ENCODE measurements at regions of chr7 and their contacts with region 1.

Region 1: DNA sequence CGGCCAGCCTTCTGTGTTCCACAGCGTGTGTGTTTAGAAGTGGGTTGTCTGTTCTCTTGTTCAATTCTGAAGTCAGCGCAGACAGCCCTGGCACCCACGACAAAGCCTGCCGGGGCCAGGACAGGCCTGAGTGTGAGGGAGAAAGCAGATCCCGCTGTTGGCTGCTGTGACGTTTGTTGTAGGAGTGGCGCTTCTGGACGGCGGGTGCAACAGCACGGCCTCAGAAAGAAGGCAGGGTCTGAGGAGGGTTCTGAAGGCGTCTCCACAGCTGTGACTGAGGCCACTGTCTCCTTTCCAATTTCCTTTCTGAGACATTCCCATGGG is 76.2 kb downstream of the VIPR2 start:
- DNase-seq: peak; percentile 79 to 88
- ATAC-seq: peak; percentile 90 to 96 (median 91)
- H3K4me3 ChIP-seq: peak overlapping the region; percentile 15
- H3K27ac ChIP-seq: peak overlapping the region; percentile 78
- H3K4me1 ChIP-seq: peaks cover 17% of the 10 kb centered on the region
- H3K27me3 ChIP-seq: no peaks in the 10 kb centered on the region
- CTCF ChIP-seq: no peak

Region 2: GRCh38 chr7:157438121-157439025 is 1630.1 kb before region 1 on chr7:
- intact Hi-C with region 1: no loop called
- DNase-seq: peak in 1 of 2 donors; percentile 20
- ATAC-seq: no peak
- H3K4me3 ChIP-seq: no peak overlapping the region
- H3K27ac ChIP-seq: no peak overlapping the region
- H3K4me1 ChIP-seq: no peaks in the 10 kb centered on the region
- H3K27me3 ChIP-seq: no peaks in the 10 kb centered on the region
- CTCF ChIP-seq: no peak

Region 3: GRCh38 chr7:158760936-158761335 is 307.5 kb before region 1 on chr7:
- intact Hi-C with region 1: no loop called
- DNase-seq: no peak
- ATAC-seq: no peak
- H3K4me3 ChIP-seq: no peak overlapping the region
- H3K27ac ChIP-seq: no peak overlapping the region
- H3K4me1 ChIP-seq: no peaks in the 10 kb centered on the region
- H3K27me3 ChIP-seq: no peaks in the 10 kb centered on the region
- CTCF ChIP-seq: no peak

Region 4: DNA sequence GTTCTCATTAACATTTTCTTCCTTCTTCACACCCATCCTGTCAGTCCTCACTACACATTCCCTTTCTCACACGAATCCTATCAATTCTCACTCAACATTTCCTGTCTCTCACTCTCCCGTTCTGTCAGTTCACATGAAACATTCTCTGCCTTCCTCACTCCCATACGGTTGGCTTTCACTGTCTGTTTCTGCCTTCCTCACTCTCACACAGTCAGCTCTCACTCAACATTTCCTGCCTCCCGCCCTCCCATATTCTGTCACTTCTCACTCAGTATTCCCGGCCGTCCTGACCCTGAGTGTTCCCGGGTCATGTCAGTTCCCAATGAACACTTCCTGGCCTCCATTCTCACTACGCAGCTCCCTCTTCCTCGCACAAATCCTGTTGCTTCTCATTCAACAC is 150.6 kb before region 1 on chr7:
- intact Hi-C with region 1: no loop called
- DNase-seq: no peak
- ATAC-seq: no peak
- H3K4me3 ChIP-seq: no peak overlapping the region
- H3K27ac ChIP-seq: no peak overlapping the region
- H3K4me1 ChIP-seq: no peaks in the 10 kb centered on the region
- H3K27me3 ChIP-seq: no peaks in the 10 kb centered on the region
- CTCF ChIP-seq: no peak

Region 5: GRCh38 chr7:159049266-159050025 is 19.0 kb before region 1 on chr7:
- intact Hi-C with region 1: loop called in 1 of 2 experiments (anchors 2 kb)
- DNase-seq: no peak
- ATAC-seq: no peak
- H3K4me3 ChIP-seq: no peak overlapping the region
- H3K27ac ChIP-seq: no peak overlapping the region
- H3K4me1 ChIP-seq: no peaks in the 10 kb centered on the region
- H3K27me3 ChIP-seq: no peaks in the 10 kb centered on the region
- CTCF ChIP-seq: no peak

Region 6: DNA sequence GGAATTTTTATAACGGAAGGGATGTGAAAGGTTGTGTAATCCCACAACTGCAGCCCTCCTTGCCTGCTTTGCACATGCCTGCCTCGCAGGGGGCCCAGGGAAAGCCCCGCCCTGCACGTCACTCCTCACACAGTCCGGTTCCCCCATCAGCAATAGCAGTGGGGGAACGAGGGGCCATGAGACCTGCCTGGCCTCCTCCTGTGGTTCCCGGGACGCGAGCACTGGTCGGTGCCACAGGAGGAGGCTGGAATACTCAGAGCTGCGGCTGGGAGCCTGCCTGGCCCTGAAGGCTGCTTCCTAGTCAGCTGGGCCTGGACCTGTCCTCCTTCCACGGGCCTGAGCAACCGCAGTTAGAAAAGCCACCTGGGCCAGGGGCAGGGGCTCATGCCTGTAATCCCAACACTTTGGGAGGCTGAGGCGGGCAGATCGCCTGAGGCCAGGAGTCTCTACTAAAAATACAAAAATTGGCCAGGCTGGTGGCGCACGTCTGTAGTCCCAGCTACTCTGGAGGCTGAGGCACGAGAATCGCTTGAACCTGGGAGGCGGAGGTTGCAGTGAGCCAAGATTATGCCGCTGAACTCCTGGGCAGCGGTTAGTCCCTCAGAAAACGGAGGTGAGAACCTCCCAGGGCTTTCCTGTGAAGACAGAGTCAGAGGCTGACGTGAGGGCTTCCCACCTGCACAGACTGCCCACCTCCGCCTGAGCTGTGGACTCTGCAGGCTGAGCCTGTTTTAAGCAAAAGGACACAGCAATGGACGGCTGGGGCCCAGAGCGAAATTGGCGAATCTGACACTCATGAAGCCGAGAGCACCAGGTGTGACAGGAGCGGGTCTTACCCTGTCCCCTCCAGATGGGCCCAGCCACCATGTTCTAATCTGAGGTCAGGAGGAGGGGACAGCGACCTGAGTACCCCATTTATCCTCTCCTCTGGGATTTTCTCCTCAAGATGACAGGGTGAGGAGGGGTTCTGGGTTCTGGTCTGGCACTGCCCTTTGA is 23.3 kb after region 1 on chr7:
- intact Hi-C with region 1: loop called in 1 of 2 experiments (anchors 2 kb)
- DNase-seq: no peak
- ATAC-seq: no peak
- H3K4me3 ChIP-seq: no peak overlapping the region
- H3K27ac ChIP-seq: no peak overlapping the region
- H3K4me1 ChIP-seq: peaks cover 26% of the 10 kb centered on the region
- H3K27me3 ChIP-seq: no peaks in the 10 kb centered on the region
- CTCF ChIP-seq: no peak

Region 7: DNA sequence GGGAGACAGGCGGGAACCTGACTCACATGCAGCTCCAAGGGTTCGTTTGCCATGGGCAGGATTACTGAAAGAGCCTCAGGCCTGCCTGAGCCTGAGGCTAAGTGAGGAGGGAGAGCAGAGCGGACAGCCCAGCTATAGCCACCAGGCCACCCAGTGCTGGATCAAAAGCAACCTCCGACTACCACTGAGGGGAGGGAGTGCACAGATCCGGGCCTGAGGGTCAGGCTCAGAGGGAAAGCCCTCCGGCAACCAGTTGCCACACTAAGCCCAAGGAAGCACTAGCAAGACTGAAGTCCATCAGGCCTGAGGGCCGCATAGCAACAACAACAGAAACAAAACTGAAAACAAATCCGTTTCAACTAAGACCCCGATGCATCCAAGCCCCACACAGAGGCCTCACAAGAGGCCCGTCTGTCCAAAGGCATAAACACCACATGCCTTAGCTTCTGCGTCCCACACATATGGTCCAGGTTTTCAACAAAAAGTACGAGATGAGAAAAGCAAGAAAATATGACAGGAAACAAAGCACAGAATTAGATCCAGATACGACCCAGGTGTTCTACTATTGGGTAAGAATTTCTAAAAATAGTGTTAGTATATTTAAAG is 168.7 kb after region 1 on chr7:
- intact Hi-C with region 1: no loop called
- DNase-seq: no peak
- ATAC-seq: no peak
- H3K4me3 ChIP-seq: no peak overlapping the region
- H3K27ac ChIP-seq: no peak overlapping the region
- H3K4me1 ChIP-seq: no peaks in the 10 kb centered on the region
- H3K27me3 ChIP-seq: peaks cover 0 to 2% (median 0%) of the 10 kb centered on the region in 3 donors
- CTCF ChIP-seq: no peak